Mammary epithelial cell (primary cell): ENCODE measurements at regions of chr1 and their contacts with region 1.

Region 1: GRCh38 chr1:45569962-45570581 is 13.8 kb upstream of the NASP start:
- DNase-seq: peak; percentile 62
- H3K4me3 ChIP-seq: no peak overlapping the region
- H3K27ac ChIP-seq: no peak overlapping the region
- H3K4me1 ChIP-seq: no peaks in the 10 kb centered on the region
- H3K27me3 ChIP-seq: no peaks in the 10 kb centered on the region
- CTCF ChIP-seq: peak; percentile 99 to 100

Region 2: GRCh38 chr1:45339789-45340570 is 230.1 kb before region 1 on chr1 and contains the starts of genes MUTYH and TOE1:
- CTCF ChIA-PET with region 1: no interaction called
- dilution Hi-C with region 1: loop called (anchors 5 kb)
- in situ Hi-C with region 1: loop called in 1 of 2 experiments (anchors 10 kb)
- intact Hi-C with region 1: no loop called
- DNase-seq: peak; percentile 91
- H3K4me3 ChIP-seq: peak within 1 kb of the TSS; percentile 58 to 75 (median 68)
- H3K27ac ChIP-seq: peak within 1 kb of the TSS; percentile 84
- H3K4me1 ChIP-seq: peaks cover 12% of the 10 kb centered on the region
- H3K27me3 ChIP-seq: no peaks in the 10 kb centered on the region
- CTCF ChIP-seq: no peak
- total RNA-seq, gene MUTYH: 9.8 to 24.8 TPM
- total RNA-seq, gene TOE1: 9.0 to 12.8 TPM

Region 3: GRCh38 chr1:45359882-45360513 is 210.1 kb before region 1 on chr1:
- CTCF ChIA-PET with region 1: no interaction called
- dilution Hi-C with region 1: no loop called
- in situ Hi-C with region 1: no loop called
- intact Hi-C with region 1: loop called (anchors 1 kb)
- DNase-seq: peak; percentile 47
- H3K4me3 ChIP-seq: no peak overlapping the region
- H3K27ac ChIP-seq: peak overlapping the region; percentile 32
- H3K4me1 ChIP-seq: peaks cover 13% of the 10 kb centered on the region
- H3K27me3 ChIP-seq: no peaks in the 10 kb centered on the region
- CTCF ChIP-seq: peak; percentile 55 to 59

Region 4: GRCh38 chr1:45375104-45376090 is 194.7 kb before region 1 on chr1:
- CTCF ChIA-PET with region 1: no interaction called
- dilution Hi-C with region 1: no loop called
- in situ Hi-C with region 1: loop called in 1 of 2 experiments (anchors 10 kb)
- intact Hi-C with region 1: no loop called
- DNase-seq: no peak
- H3K4me3 ChIP-seq: no peak overlapping the region
- H3K27ac ChIP-seq: no peak overlapping the region
- H3K4me1 ChIP-seq: no peaks in the 10 kb centered on the region
- H3K27me3 ChIP-seq: no peaks in the 10 kb centered on the region
- CTCF ChIP-seq: no peak

Region 5: DNA sequence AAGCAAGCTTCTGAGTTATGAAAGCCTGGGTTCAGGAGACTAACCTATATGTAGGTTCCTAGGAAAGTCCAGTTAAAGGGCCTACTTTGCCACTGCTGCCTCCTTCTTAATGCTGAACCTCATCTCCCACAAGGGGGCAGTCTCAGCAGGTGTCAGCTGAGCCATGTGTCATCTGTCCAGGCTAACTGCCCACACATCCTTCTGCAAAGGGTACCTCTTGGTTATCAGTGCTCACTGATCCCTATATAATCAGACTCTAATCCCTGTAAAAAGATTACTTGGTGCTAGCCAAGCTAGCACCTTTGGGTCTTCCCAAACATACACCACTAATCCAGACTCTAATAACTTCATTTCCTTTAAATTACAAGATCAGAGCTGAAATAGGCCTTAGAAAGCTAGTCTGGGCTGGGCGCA is 57.4 kb before region 1 on chr1:
- CTCF ChIA-PET with region 1: interaction called, 4 read pairs
- dilution Hi-C with region 1: no loop called
- in situ Hi-C with region 1: loop called in 1 of 2 experiments (anchors 5 kb)
- intact Hi-C with region 1: loop called (anchors 1 kb)
- DNase-seq: peak; percentile 48
- H3K4me3 ChIP-seq: no peak overlapping the region
- H3K27ac ChIP-seq: no peak overlapping the region
- H3K4me1 ChIP-seq: no peaks in the 10 kb centered on the region
- H3K27me3 ChIP-seq: no peaks in the 10 kb centered on the region
- CTCF ChIP-seq: peak; percentile 68 to 84

Region 6: GRCh38 chr1:45521398-45522323 is 48.4 kb before region 1 on chr1 and contains the start of gene PRDX1:
- CTCF ChIA-PET with region 1: no interaction called
- dilution Hi-C with region 1: no loop called
- in situ Hi-C with region 1: no loop called
- intact Hi-C with region 1: loop called (anchors 2 kb)
- DNase-seq: peak; percentile 97
- H3K4me3 ChIP-seq: peak within 1 kb of the TSS; percentile 85 to 96 (median 87)
- H3K27ac ChIP-seq: peak within 1 kb of the TSS; percentile 87
- H3K4me1 ChIP-seq: peaks cover 16% of the 10 kb centered on the region
- H3K27me3 ChIP-seq: no peaks in the 10 kb centered on the region
- CTCF ChIP-seq: peak; percentile 6 to 12
- total RNA-seq, gene PRDX1: 273 to 406 TPM